ENCODE measurements at regions of chr12 and their contacts with region 1.

Region 1: DNA sequence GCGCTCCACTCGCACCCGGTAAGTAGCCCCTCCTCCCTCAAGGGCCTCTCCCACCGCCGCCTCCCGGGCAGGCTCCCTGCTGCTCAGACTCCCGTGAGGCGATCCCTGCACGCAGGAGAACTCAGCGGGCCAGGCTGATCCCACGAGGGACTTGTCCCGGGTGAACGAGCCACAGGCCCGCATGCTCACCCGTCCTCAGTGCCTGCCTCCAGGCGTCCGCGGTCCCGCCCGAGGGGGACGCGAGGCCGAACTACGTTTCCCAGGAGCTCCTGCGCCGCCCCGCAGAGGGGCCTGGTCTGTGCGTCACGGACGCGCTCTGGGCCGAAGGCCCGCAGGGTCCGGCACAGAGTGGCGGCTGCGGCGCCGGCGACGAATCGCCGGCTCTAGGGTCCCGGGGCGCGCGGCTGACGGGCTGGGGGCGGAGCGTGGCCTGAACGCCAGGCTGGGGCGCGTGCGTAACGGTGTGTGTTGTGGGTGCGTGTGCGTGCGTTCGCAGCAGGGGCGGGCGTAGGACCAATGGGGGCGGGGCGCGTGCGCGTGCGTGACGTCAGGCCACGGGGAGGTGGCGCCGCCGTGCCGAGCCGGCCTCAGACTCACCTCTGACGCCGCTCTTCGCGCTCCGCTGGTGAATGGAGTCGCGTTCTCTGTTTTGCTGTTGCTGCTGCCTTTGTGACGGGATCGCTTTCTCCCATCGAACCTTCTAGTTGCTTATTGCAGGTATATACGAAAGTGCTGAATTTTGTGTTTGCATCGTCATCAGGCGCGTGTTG is at the starts of genes ZNF10 and ZNF891:
- DNase-seq: peak; percentile 81 to 93 (median 87)
- H3K4me3 ChIP-seq: peak within 1 kb of the TSS; percentile 55 to 74 (median 72)
- H3K4me3 Mint-ChIP-seq: peak within 1 kb of the TSS; percentile 86 to 92
- H3K27ac ChIP-seq: peak within 1 kb of the TSS; percentile 83 to 88
- H3K27ac Mint-ChIP-seq: peak within 1 kb of the TSS; percentile 88 to 97 (median 95)
- H3K4me1 ChIP-seq: peaks cover 14% of the 10 kb centered on the region in 2 donors
- H3K4me1 Mint-ChIP-seq: peaks cover 15% of the 10 kb centered on the region
- H3K27me3 ChIP-seq: no peaks in the 10 kb centered on the region
- H3K27me3 Mint-ChIP-seq: peaks cover 0 to 3% (median 1%) of the 10 kb centered on the region in 3 donors
- CTCF ChIP-seq: no peak
- polyA plus RNA-seq, gene ZNF10: 0.68 to 1.00 (median 0.79) TPM
- polyA plus RNA-seq, gene ZNF891: 0.08 to 0.45 (median 0.18) TPM

Region 2: GRCh38 chr12:132783917-132784531 is 346.2 kb before region 1 on chr12:
- intact Hi-C with region 1: no loop called
- DNase-seq: no peak
- H3K4me3 ChIP-seq: no peak overlapping the region
- H3K4me3 Mint-ChIP-seq: no peak overlapping the region
- H3K27ac ChIP-seq: peak overlapping the region in 1 of 2 donors; percentile 20
- H3K27ac Mint-ChIP-seq: peak overlapping the region in 3 of 7 donors; percentile 38 to 86 (median 72)
- H3K4me1 ChIP-seq: no peaks in the 10 kb centered on the region
- H3K4me1 Mint-ChIP-seq: no peaks in the 10 kb centered on the region
- H3K27me3 ChIP-seq: no peaks in the 10 kb centered on the region
- H3K27me3 Mint-ChIP-seq: peaks cover 0 to 2% (median 0%) of the 10 kb centered on the region in 3 donors
- CTCF ChIP-seq: no peak

Region 3: DNA sequence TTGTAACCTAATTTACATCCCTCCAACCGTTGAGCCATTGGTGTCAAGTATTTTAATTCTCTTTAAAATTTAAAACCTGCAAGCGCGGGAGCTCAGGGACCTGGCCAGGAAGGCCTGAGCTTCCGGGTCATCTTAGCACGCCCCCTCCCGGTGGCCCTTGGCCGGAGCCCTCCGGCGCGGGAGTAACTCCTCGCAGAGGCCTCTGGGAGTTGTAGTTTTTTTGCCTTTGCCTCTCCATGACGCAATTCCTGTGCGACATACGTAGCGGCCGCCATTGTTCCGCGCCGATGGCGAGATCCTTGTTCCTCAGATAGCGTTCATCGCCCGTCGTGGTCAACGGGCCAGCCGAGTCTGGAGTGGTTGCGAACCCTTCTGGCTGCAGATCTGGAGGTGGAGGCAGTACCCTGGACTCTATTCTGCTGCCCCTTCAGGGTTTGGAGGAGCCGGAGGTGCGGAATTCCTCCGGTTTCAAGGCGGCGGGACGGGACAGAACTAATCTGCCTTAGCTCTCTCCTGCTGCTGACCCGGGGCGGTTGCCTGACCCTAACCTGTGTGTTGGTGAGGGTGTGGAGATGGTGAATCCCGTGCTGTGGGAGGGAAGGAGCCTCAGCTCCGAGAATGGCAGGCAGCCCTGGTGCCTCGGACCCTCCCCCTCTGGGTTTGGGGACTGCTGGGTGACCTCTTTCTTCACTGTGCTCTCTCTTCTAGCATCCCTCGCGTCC is 51.2 kb after region 1 on chr12 and contains the start of gene ZNF268:
- intact Hi-C with region 1: loop called (anchors 2 kb)
- DNase-seq: peak; percentile 88 to 90 (median 89)
- H3K4me3 ChIP-seq: peak within 1 kb of the TSS; percentile 65 to 94 (median 87)
- H3K4me3 Mint-ChIP-seq: peak within 1 kb of the TSS; percentile 92 to 96
- H3K27ac ChIP-seq: peak within 1 kb of the TSS; percentile 62 to 91
- H3K27ac Mint-ChIP-seq: peak within 1 kb of the TSS; percentile 87 to 93 (median 93)
- H3K4me1 ChIP-seq: peaks cover 7% of the 10 kb centered on the region in 2 donors
- H3K4me1 Mint-ChIP-seq: peaks cover 10% of the 10 kb centered on the region
- H3K27me3 ChIP-seq: no peaks in the 10 kb centered on the region
- H3K27me3 Mint-ChIP-seq: peaks cover 0 to 2% (median 0%) of the 10 kb centered on the region in 3 donors
- CTCF ChIP-seq: peak; percentile 80
- polyA plus RNA-seq, gene ZNF268: 3.3 to 6.0 (median 5.8) TPM

Measured in CD14-positive monocyte (primary cell).